K562 (cell line): ENCODE measurements at regions of chr14 and their contacts with region 1.

Region 1: DNA sequence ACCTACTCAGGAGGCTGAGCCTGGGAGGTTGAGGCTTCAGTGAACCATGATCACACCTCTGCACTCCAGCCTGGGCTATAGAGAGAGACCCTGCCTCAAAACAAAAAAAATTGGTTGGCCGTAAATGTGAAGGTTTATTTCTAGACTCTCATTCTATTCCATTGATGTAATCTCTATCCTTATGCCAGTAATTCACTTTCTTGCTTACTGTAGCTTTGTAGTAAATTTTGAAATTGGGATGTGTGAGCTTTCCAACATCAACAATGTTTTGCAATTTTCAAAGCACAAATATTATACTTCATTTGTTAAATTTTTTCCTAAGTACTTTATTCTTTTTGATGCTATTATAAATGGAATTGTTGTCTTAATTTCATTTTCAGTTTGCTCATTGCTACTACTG is 24.6 kb downstream of the LIN52 start:
- DNase-seq: no peak
- ATAC-seq: no peak
- H3K4me3 ChIP-seq: no peak overlapping the region
- H3K27ac ChIP-seq: no peak overlapping the region
- H3K4me1 ChIP-seq: no peaks in the 10 kb centered on the region
- H3K27me3 ChIP-seq: no peaks in the 10 kb centered on the region
- CTCF ChIP-seq: no peak
- EP300 ChIP-seq: no peak
- POLR2A ChIP-seq: no peak
- RAD21 ChIP-seq: no peak

Region 2: DNA sequence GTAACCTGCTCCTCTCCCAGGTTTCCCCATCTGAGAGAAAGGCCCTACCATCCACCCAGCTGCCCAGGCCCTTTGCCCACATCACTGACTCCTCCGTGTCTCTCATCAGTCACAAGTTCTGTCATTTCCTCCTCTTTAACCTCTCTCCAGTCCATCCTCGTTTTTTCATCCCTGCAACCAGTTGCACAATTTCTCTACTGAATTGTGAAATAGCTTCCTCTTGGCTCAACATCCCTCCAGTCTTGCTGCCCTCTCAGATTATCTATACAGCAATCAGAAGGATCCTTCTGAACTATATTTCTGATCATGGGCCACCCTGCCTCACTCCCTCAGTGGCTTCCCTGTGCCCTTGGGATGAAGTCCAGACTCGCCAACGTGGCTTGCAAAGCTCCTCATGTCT is 166.3 kb before region 1 on chr14:
- CTCF ChIA-PET with region 1: no interaction called
- POLR2A ChIA-PET with region 1: no interaction called
- in situ Hi-C with region 1: no loop called
- intact Hi-C with region 1: no loop called
- DNase-seq: no peak
- ATAC-seq: no peak
- H3K4me3 ChIP-seq: no peak overlapping the region
- H3K27ac ChIP-seq: no peak overlapping the region
- H3K4me1 ChIP-seq: peaks cover 0 to 10% of the 10 kb centered on the region in 2 experiments; a peak in 3 of 5 replicates
- H3K27me3 ChIP-seq: no peaks in the 10 kb centered on the region
- CTCF ChIP-seq: no peak
- EP300 ChIP-seq: no peak
- POLR2A ChIP-seq: no peak
- RAD21 ChIP-seq: no peak

Region 3: GRCh38 chr14:74217672-74218448 is 108.5 kb after region 1 on chr14:
- CTCF ChIA-PET with region 1: no interaction called
- POLR2A ChIA-PET with region 1: no interaction called
- in situ Hi-C with region 1: no loop called
- intact Hi-C with region 1: loop called (anchors 10 kb)
- DNase-seq: peak; percentile 78 to 84 (median 80)
- ATAC-seq: peak; percentile 99
- H3K4me3 ChIP-seq: peak overlapping the region; percentile 10; the same call in 1 of the 2 replicates
- H3K27ac ChIP-seq: no peak overlapping the region
- H3K4me1 ChIP-seq: peaks cover 0 to 14% of the 10 kb centered on the region in 2 experiments; a peak in 3 of 5 replicates
- H3K27me3 ChIP-seq: peaks cover 2 to 43% of the 10 kb centered on the region in 2 experiments; a peak in 2 of 5 replicates
- CTCF ChIP-seq: peak; percentile 73 to 90 (median 85)
- EP300 ChIP-seq: no peak
- POLR2A ChIP-seq: no peak
- RAD21 ChIP-seq: peak in 1 of 2 experiments; percentile 53; a peak in 2 of 4 replicates

Region 4: DNA sequence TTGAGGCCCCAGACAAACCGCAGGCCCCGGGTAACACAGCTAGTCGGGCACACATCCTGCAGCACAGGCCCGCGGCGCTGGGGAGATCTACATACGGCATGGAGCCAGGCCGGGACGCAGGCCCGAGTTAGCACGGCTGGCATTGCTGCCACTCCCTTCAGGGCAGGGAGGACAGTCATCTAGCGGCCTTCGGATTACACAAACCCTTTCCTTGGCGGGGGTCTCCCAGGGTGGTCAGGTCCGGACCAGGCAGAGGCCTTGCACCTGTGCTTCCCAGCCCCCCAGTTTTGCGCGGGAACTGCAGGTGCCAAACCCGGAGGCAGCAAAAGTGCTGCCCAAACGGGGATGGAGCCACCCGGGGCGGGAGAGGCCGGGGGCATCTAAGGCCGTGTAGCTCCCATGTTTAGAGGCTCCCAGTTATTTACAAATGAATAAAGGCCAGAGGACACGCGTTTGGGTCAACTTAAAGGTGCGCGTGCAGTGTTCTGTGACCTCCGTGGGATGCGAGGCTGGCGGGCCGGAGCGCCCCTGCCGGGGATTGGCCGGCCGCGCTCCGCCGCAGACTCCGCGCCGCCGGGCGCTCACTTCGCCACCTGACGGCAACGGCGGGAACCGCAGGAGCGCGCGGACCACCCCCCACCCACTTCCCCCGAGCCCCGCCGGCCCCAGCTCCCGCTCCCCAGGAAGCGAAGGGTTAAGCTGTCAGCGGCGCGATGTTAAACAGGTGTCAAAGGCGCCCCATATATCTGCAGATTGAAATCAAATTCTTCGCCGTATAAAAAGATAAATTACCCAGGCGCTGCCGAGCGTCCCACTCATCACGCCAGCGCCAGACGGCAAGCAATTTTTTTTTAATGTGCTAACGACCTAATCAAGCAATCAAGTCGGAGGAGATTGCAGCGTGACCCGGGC is 148.0 kb after region 1 on chr14:
- CTCF ChIA-PET with region 1: interaction called, 43 read pairs
- POLR2A ChIA-PET with region 1: no interaction called
- in situ Hi-C with region 1: no loop called
- intact Hi-C with region 1: no loop called
- DNase-seq: peak; percentile 45 to 82 (median 78)
- ATAC-seq: peak; percentile 94
- H3K4me3 ChIP-seq: peak overlapping the region; percentile 38
- H3K27ac ChIP-seq: no peak overlapping the region
- H3K4me1 ChIP-seq: peaks cover 0 to 18% of the 10 kb centered on the region in 2 experiments; a peak in 2 of 5 replicates
- H3K27me3 ChIP-seq: peaks cover 9 to 35% of the 10 kb centered on the region in 2 experiments; a peak in 4 of 5 replicates
- CTCF ChIP-seq: peak; percentile 82 to 98 (median 91)
- EP300 ChIP-seq: no peak
- POLR2A ChIP-seq: no peak
- RAD21 ChIP-seq: peak in 1 of 2 experiments; percentile 56; a peak in 2 of 4 replicates